ENCODE measurements at regions of chrX and their contacts with region 1.

Region 1: GRCh38 chrX:12814420-12814819 is 23.2 kb downstream of the PRPS2 start:
- DNase-seq: peak; percentile 43
- H3K4me3 ChIP-seq: no peak overlapping the region
- H3K27ac ChIP-seq: no peak overlapping the region
- H3K4me1 ChIP-seq: no peaks in the 10 kb centered on the region
- H3K27me3 ChIP-seq: peaks cover 5% of the 10 kb centered on the region
- CTCF ChIP-seq: peak; percentile 73
- EP300 ChIP-seq: no peak
- RAD21 ChIP-seq: peak; percentile 86

Region 2: DNA sequence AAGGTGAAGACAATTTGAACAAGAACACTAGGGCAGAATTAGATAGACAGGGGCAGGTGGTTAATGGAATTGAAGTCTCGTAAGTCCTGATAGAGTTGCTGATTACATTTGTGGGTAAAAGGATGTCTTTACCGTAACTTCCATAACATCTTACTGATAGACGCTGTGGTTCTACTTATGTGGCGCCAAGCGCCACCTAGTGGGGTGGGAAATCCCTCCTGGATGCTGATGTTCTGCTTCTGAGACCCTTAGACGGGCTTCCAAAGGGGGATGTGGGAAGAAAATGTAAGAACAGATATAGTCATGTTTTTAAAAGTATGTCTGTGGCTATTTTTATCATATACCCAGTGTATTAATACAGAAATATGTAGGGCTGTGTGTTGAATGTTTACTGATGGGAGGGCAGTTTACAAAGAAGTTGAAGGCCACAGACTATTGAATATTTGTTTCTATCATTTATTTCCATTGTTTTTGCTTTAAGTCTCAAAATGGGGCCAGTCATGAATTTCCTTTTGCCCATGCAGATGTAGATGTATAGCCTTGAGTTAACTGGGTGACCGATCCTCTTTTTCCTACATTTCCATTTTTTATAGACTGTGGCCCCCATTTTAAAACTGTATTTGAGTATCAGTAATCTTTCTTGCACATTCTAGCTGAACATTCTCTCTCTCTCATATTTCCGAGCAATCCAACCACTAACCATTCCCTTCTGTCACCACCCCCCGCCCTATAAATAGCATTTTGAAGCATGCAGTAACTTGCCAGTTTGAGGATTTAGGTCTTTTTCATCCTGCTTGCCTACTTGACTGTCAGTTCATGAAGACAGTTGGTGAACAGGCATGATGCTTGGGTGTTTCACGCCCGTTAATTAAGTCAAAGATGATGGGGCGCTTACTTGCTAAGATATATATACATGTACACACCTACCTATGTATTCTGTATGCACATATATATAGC is 79.9 kb after region 1 on chrX:
- CTCF ChIA-PET with region 1: interaction called, 56 read pairs
- POLR2A ChIA-PET with region 1: no interaction called
- DNase-seq: peak; percentile 50
- H3K4me3 ChIP-seq: no peak overlapping the region
- H3K27ac ChIP-seq: no peak overlapping the region
- H3K4me1 ChIP-seq: no peaks in the 10 kb centered on the region
- H3K27me3 ChIP-seq: peaks cover 27% of the 10 kb centered on the region; the same call in 1 of the 2 replicates
- CTCF ChIP-seq: peak; percentile 78
- EP300 ChIP-seq: no peak
- RAD21 ChIP-seq: peak; percentile 74

Region 3: GRCh38 chrX:12901486-12901885 is 87.1 kb after region 1 on chrX:
- CTCF ChIA-PET with region 1: interaction called, 56 read pairs
- POLR2A ChIA-PET with region 1: interaction called, 3 read pairs
- DNase-seq: peak; percentile 70
- H3K4me3 ChIP-seq: no peak overlapping the region
- H3K27ac ChIP-seq: no peak overlapping the region
- H3K4me1 ChIP-seq: no peaks in the 10 kb centered on the region
- H3K27me3 ChIP-seq: peaks cover 15% of the 10 kb centered on the region; the same call in 1 of the 2 replicates
- CTCF ChIP-seq: peak; percentile 74
- EP300 ChIP-seq: no peak
- RAD21 ChIP-seq: peak; percentile 72

Measured in SK-N-SH (cell line).